ENCODE measurements at regions of chr7 and their contacts with region 1.

Region 1: DNA sequence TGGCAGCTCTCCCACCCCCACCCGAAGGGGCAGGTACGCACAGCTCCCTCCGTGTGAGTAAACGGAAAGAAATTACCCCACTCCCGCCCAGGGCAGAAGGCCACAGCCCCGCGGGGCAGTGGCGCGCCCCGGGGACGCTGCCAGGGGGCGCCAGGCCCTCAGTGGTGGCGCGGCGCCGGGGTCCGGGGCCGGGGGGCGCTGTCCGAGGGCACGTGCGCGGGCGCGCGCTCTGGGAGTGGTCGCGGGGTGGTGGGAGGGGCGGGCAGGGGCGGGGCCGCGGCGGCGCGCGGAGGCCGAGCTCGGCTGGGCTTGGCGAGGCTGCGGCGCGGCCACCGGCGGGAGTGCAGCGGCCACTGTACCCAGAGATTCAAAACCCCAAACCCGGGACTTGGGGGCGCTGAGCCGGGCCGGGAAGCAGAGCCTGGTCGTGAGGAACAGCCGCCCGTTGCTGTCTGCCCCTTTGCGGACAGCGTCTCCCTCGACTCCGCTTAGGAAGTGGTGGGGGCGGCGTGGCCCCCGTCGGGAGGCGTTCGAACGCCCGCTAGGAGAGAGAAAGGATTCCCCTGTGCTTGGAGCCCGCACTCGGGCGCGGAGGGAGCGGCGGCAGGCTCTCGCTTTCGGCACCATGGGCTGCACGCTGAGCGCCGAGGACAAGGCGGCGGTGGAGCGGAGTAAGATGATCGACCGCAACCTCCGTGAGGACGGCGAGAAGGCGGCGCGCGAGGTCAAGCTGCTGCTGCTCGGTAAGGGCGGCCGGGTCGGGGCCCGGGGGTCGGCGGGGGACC is at the start of gene GNAI1:
- DNase-seq: no peak
- H3K4me3 ChIP-seq: peak within 1 kb of the TSS; percentile 79
- CTCF ChIP-seq: peak; percentile 40

Region 2: GRCh38 chr7:80066646-80067045 is 68.1 kb before region 1 on chr7:
- in situ Hi-C with region 1: loop called (anchors 5 kb)
- DNase-seq: no peak
- H3K4me3 ChIP-seq: no peak overlapping the region
- CTCF ChIP-seq: no peak

Region 3: DNA sequence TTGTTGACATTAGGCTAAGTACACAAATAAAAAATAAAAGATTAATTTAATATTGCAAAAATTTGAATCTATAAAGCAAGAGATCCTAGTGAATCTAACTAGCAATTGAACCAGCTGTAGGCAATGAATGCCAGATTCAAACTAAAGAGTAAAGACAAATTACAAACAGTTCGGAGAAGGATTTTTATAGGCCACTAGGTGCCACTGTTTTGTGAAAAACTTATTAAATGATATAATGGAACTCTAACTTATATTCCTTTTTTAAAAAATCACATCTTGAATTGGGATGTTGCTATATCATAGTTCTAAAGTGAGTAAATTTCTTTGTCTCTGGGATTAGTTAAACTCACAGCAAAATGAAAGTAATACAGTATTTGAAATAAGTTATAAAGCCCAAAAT is 39.2 kb before region 1 on chr7:
- in situ Hi-C with region 1: loop called (anchors 5 kb)
- DNase-seq: no peak
- H3K4me3 ChIP-seq: no peak overlapping the region
- CTCF ChIP-seq: peak; percentile 26

Region 4: DNA sequence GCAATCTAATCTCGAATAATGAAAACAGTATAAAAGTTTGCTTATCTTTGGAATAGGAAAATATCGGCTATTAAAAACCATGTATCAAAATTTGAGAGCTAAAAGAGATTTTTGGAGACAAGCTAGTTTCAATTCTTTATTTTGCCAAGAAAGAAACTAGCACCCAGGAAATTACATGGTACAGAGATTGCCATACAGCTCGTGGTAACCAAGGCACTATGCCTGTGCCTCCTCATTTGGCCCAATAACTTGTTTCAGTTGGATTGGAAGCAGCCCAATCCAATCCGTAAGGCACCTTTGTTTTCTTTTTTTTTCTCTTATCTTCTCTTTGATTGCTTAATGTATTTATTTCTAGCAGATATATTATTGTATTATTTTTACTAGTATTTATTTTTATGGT is 54.9 kb after region 1 on chr7:
- in situ Hi-C with region 1: loop called (anchors 5 kb)
- DNase-seq: no peak
- H3K4me3 ChIP-seq: no peak overlapping the region
- CTCF ChIP-seq: no peak

Measured in astrocyte of the cerebellum (primary cell).